ENCODE measurements at regions of chr7 and their contacts with region 1.

Region 1: DNA sequence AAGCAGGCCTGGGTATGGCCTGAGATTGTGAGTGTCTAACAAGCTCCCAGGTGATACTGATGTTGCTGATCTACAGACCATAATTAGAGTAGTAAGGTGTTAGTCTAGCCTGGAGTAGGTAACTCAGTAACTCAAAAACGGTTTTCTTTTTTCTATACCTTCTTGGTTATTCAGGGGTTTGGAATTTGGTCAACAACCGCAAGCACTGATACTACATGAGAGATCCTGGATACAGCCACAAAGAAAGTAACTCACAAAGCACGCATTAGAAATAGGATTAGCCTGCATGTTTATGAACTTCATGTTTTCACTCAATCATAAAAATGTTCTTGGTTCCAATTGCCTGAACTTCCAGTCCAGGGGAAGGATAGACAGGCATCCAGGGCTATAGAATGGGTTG is 803.5 kb downstream of the MAGI2 start:
- DNase-seq: no peak
- ATAC-seq: no peak
- H3K4me3 ChIP-seq: no peak overlapping the region
- H3K4me3 Mint-ChIP-seq: no peak overlapping the region
- H3K27ac ChIP-seq: no peak overlapping the region
- H3K27ac Mint-ChIP-seq: no peak overlapping the region
- H3K4me1 ChIP-seq: no peaks in the 10 kb centered on the region
- H3K4me1 Mint-ChIP-seq: no peaks in the 10 kb centered on the region
- H3K27me3 ChIP-seq: no peaks in the 10 kb centered on the region
- H3K27me3 Mint-ChIP-seq: no peaks in the 10 kb centered on the region

Region 2: DNA sequence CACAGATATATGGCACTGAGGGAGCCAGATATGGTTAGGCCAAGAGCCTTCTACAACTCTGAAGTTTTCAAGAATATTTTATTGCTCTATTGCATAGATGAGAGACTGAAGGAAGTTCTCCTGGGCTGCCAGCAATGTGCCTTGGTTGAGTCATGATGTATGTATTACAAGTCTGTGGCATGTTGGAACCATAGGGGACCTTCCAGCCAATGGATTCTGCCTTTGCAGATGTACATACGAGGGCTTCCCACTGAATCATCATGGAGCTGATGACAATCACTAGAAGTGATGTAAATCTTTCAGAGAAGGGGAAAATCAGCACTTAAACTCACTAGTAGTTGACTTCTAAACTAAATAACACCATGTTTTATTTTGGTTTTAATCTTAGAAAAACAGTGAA is 431.9 kb before region 1 on chr7:
- CTCF ChIA-PET with region 1: no interaction called
- POLR2A ChIA-PET with region 1: no interaction called
- intact Hi-C with region 1: no loop called
- DNase-seq: no peak
- ATAC-seq: no peak
- H3K4me3 ChIP-seq: no peak overlapping the region
- H3K4me3 Mint-ChIP-seq: no peak overlapping the region
- H3K27ac ChIP-seq: no peak overlapping the region
- H3K27ac Mint-ChIP-seq: no peak overlapping the region
- H3K4me1 ChIP-seq: no peaks in the 10 kb centered on the region
- H3K4me1 Mint-ChIP-seq: no peaks in the 10 kb centered on the region
- H3K27me3 ChIP-seq: no peaks in the 10 kb centered on the region
- H3K27me3 Mint-ChIP-seq: peaks cover 0 to 31% (median 22%) of the 10 kb centered on the region in 5 donors

Region 3: GRCh38 chr7:78601728-78602127 is 48.2 kb before region 1 on chr7:
- CTCF ChIA-PET with region 1: no interaction called
- POLR2A ChIA-PET with region 1: no interaction called
- intact Hi-C with region 1: no loop called
- DNase-seq: no peak
- ATAC-seq: no peak
- H3K4me3 ChIP-seq: no peak overlapping the region
- H3K4me3 Mint-ChIP-seq: no peak overlapping the region
- H3K27ac ChIP-seq: no peak overlapping the region
- H3K27ac Mint-ChIP-seq: no peak overlapping the region
- H3K4me1 ChIP-seq: no peaks in the 10 kb centered on the region
- H3K4me1 Mint-ChIP-seq: no peaks in the 10 kb centered on the region
- H3K27me3 ChIP-seq: no peaks in the 10 kb centered on the region
- H3K27me3 Mint-ChIP-seq: no peaks in the 10 kb centered on the region

Region 4: DNA sequence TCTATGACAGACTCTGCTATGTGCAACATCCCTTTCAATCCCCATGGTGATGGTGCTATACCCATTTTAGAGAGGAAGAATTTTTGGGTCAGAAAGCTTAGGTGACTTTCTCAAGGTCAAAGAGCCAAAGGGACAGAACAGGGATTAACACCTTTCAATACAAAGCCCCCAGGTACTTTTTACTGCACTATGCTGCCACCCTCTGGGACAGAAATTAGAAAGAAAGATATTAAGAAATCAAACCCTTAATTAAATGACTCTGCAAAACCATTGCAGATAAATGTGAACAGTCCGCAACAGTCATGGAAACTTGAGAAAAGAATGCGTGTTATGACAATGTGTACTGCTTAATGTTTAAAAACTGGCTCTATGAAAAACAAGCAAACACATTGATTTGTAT is 129.8 kb after region 1 on chr7:
- CTCF ChIA-PET with region 1: no interaction called
- POLR2A ChIA-PET with region 1: no interaction called
- intact Hi-C with region 1: loop called in 1 of 2 experiments (anchors 10 kb)
- DNase-seq: no peak
- ATAC-seq: no peak
- H3K4me3 ChIP-seq: no peak overlapping the region
- H3K4me3 Mint-ChIP-seq: no peak overlapping the region
- H3K27ac ChIP-seq: no peak overlapping the region
- H3K27ac Mint-ChIP-seq: no peak overlapping the region
- H3K4me1 ChIP-seq: no peaks in the 10 kb centered on the region
- H3K4me1 Mint-ChIP-seq: no peaks in the 10 kb centered on the region
- H3K27me3 ChIP-seq: no peaks in the 10 kb centered on the region
- H3K27me3 Mint-ChIP-seq: no peaks in the 10 kb centered on the region

Measured in naive thymus-derived CD4-positive, alpha-beta T cell (primary cell).